A549 (cell line): ENCODE measurements at regions of chr6 and their contacts with region 1.

Region 1: DNA sequence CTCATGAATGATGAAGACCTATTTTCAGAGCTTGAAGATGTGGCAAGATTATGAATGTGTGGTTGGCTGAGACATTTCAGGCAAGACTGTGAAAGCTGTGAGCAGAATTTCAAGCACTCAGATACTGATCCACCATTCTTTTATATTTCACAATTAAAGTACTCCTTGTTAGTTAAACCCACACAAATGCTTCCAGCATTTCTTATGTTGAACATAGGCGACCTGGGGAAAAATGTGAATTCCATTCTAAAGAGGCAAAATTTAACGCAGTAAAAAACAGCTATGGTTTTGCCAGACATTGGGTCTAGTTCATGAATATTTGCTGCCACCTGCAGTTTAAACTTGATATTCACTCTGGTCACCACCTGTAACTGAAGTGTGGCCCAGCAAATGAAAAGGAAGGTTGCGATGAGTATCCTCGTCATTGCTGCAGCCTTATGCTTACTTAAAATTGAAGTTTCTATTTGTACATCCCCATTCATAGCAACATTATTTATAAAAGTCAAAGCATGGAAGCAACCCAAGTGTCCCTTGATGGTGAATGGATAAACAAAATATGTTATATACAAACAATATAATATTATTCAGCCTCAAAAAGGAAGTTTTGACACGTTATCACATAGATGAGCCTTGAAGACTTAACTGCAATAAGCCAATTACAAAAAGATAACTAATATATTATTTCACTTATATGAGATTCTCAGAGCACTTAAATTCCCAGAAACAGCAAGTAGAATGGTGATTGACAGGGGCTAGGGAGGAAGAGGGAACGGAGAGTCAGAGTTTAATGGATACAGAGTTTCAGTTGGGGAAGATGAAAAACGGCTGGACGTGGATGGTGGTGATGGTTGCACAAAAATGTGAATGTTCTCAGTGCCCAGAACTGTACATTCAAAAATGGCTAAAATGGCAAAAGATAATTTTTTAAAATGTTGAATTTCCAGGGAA is 32.4 kb upstream of the FAM184A start:
- DNase-seq: peak in 1 of 2 experiments; percentile 37
- ATAC-seq: peak; percentile 81 to 83
- H3K4me3 ChIP-seq: no peak overlapping the region
- H3K27ac ChIP-seq: no peak overlapping the region
- H3K4me1 ChIP-seq: no peaks in the 10 kb centered on the region
- CTCF ChIP-seq: peak; percentile 53
- EP300 ChIP-seq: no peak
- POLR2A ChIP-seq: no peak
- RAD21 ChIP-seq: peak; percentile 64 to 66

Region 2: DNA sequence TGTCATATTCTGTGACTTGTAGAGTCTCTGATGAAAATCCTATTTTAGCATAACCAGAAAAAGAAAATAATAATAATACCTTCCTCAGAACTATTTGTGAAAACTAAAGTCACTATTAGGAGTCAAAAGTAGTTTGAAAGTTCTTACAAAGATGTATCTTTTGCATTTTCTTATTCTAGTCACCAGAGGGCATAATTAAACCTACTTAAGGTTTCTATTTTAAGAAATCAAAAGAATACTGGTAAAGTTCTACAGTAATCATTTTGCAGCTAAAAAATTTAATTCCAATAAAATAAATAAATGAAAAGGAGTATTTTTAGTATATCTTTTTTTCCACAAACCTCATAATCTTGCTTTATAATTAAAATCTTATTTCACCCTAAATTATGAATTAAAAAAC is 147.9 kb before region 1 on chr6:
- CTCF ChIA-PET with region 1: interaction called, 36 read pairs
- POLR2A ChIA-PET with region 1: no interaction called
- DNase-seq: no peak
- ATAC-seq: no peak
- H3K4me3 ChIP-seq: no peak overlapping the region
- H3K27ac ChIP-seq: no peak overlapping the region
- H3K4me1 ChIP-seq: no peaks in the 10 kb centered on the region
- CTCF ChIP-seq: 0 out of 3 replicates have a peak, but pooled peaks have one; percentile 6
- EP300 ChIP-seq: no peak
- POLR2A ChIP-seq: no peak
- RAD21 ChIP-seq: 0 out of 5 replicates have a peak, but pooled peaks of 1 of the 2 experiments have one; percentile 9

Region 3: DNA sequence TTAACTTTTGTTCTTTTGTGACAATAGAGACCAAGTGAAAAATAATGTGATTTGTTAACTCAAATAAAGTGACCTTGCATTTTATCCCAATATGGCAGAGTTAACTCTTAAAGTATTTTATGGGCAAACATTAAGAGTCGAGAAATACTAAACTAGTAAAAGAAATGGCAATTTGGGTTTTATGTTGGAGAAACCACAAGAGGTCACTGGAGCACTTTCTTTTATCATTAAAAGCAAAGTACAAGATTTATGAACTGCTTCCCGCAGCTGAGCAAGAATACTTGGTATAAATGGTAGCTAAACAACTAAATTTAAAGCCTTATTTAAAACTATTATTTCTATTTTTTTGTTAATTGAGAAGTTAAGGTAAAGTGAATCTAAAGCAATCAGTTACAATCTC is 142.5 kb before region 1 on chr6:
- CTCF ChIA-PET with region 1: interaction called, 36 read pairs
- POLR2A ChIA-PET with region 1: no interaction called
- DNase-seq: peak in 1 of 2 experiments; percentile 20
- ATAC-seq: no peak
- H3K4me3 ChIP-seq: no peak overlapping the region
- H3K27ac ChIP-seq: no peak overlapping the region
- H3K4me1 ChIP-seq: no peaks in the 10 kb centered on the region
- CTCF ChIP-seq: peak; percentile 37
- EP300 ChIP-seq: no peak
- POLR2A ChIP-seq: no peak
- RAD21 ChIP-seq: peak; percentile 48 to 53

Region 4: GRCh38 chr6:119020597-119021561 is 90.0 kb before region 1 on chr6:
- CTCF ChIA-PET with region 1: no interaction called
- POLR2A ChIA-PET with region 1: no interaction called
- DNase-seq: no peak
- ATAC-seq: no peak
- H3K4me3 ChIP-seq: no peak overlapping the region
- H3K27ac ChIP-seq: no peak overlapping the region
- H3K4me1 ChIP-seq: no peaks in the 10 kb centered on the region
- CTCF ChIP-seq: no peak
- EP300 ChIP-seq: no peak
- POLR2A ChIP-seq: no peak
- RAD21 ChIP-seq: no peak

Region 5: GRCh38 chr6:119060255-119060907 is 50.5 kb before region 1 on chr6:
- CTCF ChIA-PET with region 1: no interaction called
- POLR2A ChIA-PET with region 1: no interaction called
- DNase-seq: no peak
- ATAC-seq: no peak
- H3K4me3 ChIP-seq: no peak overlapping the region
- H3K27ac ChIP-seq: no peak overlapping the region
- H3K4me1 ChIP-seq: no peaks in the 10 kb centered on the region
- CTCF ChIP-seq: no peak
- EP300 ChIP-seq: no peak
- POLR2A ChIP-seq: no peak
- RAD21 ChIP-seq: no peak

Region 6: DNA sequence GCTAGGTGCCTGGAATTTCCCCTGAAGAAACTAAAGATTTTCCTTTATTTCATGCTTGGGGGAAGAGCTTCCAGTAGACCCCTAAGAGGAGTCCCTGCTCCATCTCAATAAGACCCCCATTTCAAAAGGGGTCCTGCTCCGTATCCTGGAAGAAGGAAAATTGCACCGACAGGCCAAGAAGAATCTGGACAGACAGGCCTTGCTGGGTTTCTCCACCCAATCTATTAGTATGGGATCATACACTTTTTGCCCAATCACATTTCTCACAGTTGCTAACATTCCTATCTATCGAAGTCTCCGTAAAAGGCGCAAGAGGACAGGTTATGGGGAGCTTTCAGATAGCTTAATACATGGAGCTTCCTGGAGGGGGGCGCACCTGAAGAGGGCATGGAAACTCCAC is 11.5 kb before region 1 on chr6:
- CTCF ChIA-PET with region 1: interaction called, 20 read pairs
- POLR2A ChIA-PET with region 1: no interaction called
- DNase-seq: no peak
- ATAC-seq: no peak
- H3K4me3 ChIP-seq: no peak overlapping the region
- H3K27ac ChIP-seq: no peak overlapping the region
- H3K4me1 ChIP-seq: no peaks in the 10 kb centered on the region
- CTCF ChIP-seq: no peak
- EP300 ChIP-seq: no peak
- POLR2A ChIP-seq: no peak
- RAD21 ChIP-seq: no peak

Region 7: GRCh38 chr6:119209452-119210205 is 98.8 kb after region 1 on chr6:
- CTCF ChIA-PET with region 1: no interaction called
- POLR2A ChIA-PET with region 1: no interaction called
- DNase-seq: no peak
- ATAC-seq: no peak
- H3K4me3 ChIP-seq: no peak overlapping the region
- H3K27ac ChIP-seq: no peak overlapping the region
- H3K4me1 ChIP-seq: no peaks in the 10 kb centered on the region
- CTCF ChIP-seq: no peak
- EP300 ChIP-seq: no peak
- POLR2A ChIP-seq: no peak
- RAD21 ChIP-seq: no peak